Breast epithelium (tissue), 4 donors: ENCODE measurements at regions of chr11 and their contacts with region 1.

Region 1: GRCh38 chr11:100072131-100072530 is 615.0 kb upstream of the ARHGAP42 start:
- DNase-seq: no peak
- H3K4me3 ChIP-seq: no peak overlapping the region
- H3K27ac ChIP-seq: no peak overlapping the region
- H3K4me1 ChIP-seq: no peaks in the 10 kb centered on the region
- H3K27me3 ChIP-seq: no peaks in the 10 kb centered on the region
- CTCF ChIP-seq: no peak
- POLR2A ChIP-seq: no peak

Region 2: DNA sequence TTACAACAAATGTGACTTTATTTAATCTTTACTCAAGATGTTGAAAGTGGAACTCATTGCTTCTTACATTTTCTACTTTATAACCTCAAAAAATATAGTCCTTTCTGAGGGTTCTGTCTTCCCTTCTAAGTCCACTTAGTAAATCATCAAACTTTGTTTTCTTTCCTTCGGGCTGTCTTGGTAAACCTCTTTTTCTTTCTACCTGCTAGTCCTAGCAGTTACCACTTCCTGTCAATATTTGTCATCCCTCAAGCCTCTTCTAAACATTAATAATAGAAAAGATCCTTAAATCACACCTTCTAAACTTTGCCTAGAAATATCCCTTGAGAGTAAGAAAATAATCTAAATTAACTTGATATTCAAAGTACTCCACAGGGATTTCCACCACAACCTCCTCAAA is 471.0 kb before region 1 on chr11:
- intact Hi-C with region 1: loop called (anchors 5 kb)
- DNase-seq: no peak
- H3K4me3 ChIP-seq: no peak overlapping the region
- H3K27ac ChIP-seq: no peak overlapping the region
- H3K4me1 ChIP-seq: no peaks in the 10 kb centered on the region
- H3K27me3 ChIP-seq: no peaks in the 10 kb centered on the region
- CTCF ChIP-seq: no peak
- POLR2A ChIP-seq: no peak

Region 3: DNA sequence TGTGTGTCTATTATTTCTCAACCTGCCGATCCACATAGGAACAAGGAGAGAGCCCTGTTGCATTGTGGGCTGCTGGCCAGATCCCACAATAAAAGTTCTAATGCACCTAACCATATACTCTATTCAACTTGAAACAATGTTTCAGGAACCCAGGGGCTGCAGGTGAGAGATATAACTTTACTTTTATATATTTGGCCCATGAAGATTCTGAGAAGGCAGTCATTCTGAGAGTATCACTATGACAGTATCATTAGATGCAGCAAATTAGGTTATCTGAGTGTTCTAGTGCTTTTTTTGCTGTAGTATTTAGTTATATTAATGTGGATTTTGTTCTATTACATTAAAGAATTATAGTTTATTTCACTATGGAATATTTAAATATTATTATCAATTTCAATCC is 40.2 kb before region 1 on chr11:
- intact Hi-C with region 1: no loop called
- DNase-seq: no peak
- H3K4me3 ChIP-seq: no peak overlapping the region
- H3K27ac ChIP-seq: no peak overlapping the region
- H3K4me1 ChIP-seq: no peaks in the 10 kb centered on the region
- H3K27me3 ChIP-seq: no peaks in the 10 kb centered on the region
- CTCF ChIP-seq: no peak
- POLR2A ChIP-seq: no peak

Region 4: DNA sequence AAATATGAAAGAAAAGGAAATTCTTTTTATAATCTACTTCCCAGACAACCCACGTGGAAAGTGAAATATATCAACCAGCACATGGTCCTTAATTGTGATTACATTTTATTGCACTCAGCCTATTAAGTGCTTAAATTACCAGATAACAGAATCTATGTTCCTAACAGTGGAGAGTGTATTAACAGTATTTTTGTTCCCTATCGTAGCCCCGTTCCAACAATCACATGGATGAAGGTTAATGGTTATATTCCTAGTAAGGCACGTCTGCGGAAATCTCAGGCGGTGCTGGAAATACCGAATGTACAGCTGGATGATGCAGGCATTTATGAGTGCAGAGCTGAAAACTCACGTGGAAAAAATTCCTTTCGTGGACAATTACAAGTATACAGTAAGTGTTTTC is 11.1 kb before region 1 on chr11:
- intact Hi-C with region 1: no loop called
- DNase-seq: no peak
- H3K4me3 ChIP-seq: no peak overlapping the region
- H3K27ac ChIP-seq: no peak overlapping the region
- H3K4me1 ChIP-seq: no peaks in the 10 kb centered on the region
- H3K27me3 ChIP-seq: no peaks in the 10 kb centered on the region
- CTCF ChIP-seq: no peak
- POLR2A ChIP-seq: no peak

Region 5: DNA sequence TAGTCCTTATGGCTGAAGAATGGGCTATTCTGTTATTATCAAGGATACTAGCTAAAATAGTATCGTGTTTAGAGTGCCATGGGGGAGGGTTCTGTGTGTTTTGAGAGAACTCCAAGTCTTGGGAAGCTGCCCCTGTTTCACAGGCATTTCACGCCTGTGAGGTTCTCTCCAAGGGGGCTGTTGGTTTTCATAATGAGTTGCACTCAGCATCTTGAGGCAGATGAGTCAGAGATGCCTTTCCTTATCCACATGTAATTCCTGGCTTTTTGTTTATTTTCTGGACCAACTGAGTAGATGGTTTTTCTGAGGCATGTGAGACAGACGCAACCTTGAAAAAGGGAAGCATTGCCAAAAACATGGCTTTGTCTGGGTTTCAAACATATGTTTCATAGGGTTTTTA is 818.7 kb after region 1 on chr11:
- intact Hi-C with region 1: no loop called
- DNase-seq: no peak
- H3K4me3 ChIP-seq: no peak overlapping the region
- H3K27ac ChIP-seq: no peak overlapping the region
- H3K4me1 ChIP-seq: no peaks in the 10 kb centered on the region
- H3K27me3 ChIP-seq: no peaks in the 10 kb centered on the region
- CTCF ChIP-seq: no peak
- POLR2A ChIP-seq: no peak